ENCODE measurements at regions of chrX and their contacts with region 1.

Region 1: DNA sequence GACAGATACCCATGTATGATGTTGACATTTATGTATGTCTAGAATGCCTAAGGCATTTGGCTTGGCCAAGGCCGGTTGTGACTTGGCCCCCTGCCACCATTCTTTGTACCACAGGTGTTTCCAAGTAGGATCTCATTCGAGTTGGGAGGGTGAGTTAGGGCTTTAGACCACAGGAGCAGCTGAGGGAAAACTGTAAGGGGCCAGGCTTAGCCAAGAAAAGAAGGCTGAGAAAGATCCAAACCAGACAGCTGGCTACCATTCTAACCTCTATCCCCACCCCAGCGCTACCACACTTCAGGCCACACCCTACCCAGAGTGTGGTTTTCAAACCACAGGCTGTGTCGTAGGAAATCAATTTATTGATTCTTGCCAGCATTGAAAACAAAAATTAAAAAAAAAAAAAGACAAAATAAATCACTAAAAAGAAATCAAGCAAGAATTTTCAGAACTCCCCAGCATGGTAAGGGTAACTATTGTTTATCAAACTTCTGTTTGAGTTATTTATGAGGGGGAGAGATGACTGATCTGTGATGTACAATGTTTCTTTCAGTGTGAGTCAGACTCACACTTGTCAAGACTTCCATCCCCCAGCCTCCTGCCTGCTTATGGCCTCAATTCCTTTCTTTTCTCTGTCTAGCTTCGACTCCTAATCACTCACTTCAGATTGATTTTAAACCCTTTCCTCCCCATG is 9.9 kb downstream of the TMSB4X start:
- DNase-seq: no peak
- ATAC-seq: no peak
- H3K4me3 ChIP-seq: no peak overlapping the region
- H3K27ac ChIP-seq: no peak overlapping the region
- H3K4me1 ChIP-seq: no peaks in the 10 kb centered on the region
- H3K27me3 ChIP-seq: peaks cover 0 to 16% (median 0%) of the 10 kb centered on the region in 3 donors
- CTCF ChIP-seq: no peak

Region 2: GRCh38 chrX:12804655-12805054 is 180.1 kb before region 1 on chrX:
- intact Hi-C with region 1: no loop called
- DNase-seq: no peak
- ATAC-seq: no peak
- H3K4me3 ChIP-seq: no peak overlapping the region
- H3K27ac ChIP-seq: no peak overlapping the region
- H3K4me1 ChIP-seq: no peaks in the 10 kb centered on the region
- H3K27me3 ChIP-seq: no peaks in the 10 kb centered on the region
- CTCF ChIP-seq: no peak

Region 3: DNA sequence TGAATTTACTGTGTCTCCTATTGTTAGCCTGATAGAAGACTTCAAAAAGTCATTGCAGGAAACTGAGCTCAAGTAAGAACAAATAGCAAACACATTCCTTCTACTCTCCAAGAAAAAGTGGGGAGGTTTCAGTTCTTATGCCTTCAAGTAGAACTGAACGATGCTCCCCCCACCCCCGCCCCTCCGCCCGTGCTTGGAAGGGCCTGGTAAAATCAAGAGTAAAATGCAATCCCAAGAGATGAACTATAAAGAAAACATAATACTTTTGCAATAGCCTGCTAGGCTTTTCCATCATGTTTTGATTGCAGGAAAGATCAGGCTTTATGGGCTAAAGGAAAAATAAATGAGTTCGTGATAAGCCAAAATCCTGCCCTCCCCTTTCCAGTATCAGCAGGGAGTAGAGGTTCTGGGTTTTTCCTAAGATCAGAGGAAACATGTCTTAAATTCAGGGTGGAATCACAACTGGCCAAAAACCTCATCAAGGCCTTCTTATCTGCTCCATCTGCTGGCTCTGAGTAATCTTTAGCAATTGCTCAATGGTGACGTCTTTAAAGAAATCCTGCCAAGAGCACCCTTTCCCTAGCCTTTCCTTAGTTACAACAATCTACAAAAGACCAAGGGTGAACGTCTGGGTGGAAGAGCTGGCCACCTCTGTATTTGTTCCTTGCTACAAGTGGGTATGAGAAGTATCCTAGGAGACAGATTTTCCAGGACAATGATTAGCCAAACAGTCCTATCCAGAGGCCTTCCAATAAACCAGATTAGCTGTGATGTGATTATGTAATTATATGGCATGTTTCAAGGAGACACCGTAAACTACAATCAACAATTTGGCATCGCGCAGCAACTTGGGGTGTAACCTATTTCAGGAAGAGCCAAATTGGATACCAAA is 125.9 kb after region 1 on chrX:
- intact Hi-C with region 1: loop called in 1 of 2 experiments (anchors 10 kb)
- DNase-seq: peak in 1 of 2 donors; percentile 25
- ATAC-seq: peak; percentile 19 to 72 (median 54)
- H3K4me3 ChIP-seq: no peak overlapping the region
- H3K27ac ChIP-seq: peak overlapping the region; percentile 58
- H3K4me1 ChIP-seq: peaks cover 6% of the 10 kb centered on the region
- H3K27me3 ChIP-seq: no peaks in the 10 kb centered on the region
- CTCF ChIP-seq: no peak

Measured in psoas muscle (tissue), 8 donors.